Mammary epithelial cell (primary cell): ENCODE measurements at regions of chr1 and their contacts with region 1.

Region 1: DNA sequence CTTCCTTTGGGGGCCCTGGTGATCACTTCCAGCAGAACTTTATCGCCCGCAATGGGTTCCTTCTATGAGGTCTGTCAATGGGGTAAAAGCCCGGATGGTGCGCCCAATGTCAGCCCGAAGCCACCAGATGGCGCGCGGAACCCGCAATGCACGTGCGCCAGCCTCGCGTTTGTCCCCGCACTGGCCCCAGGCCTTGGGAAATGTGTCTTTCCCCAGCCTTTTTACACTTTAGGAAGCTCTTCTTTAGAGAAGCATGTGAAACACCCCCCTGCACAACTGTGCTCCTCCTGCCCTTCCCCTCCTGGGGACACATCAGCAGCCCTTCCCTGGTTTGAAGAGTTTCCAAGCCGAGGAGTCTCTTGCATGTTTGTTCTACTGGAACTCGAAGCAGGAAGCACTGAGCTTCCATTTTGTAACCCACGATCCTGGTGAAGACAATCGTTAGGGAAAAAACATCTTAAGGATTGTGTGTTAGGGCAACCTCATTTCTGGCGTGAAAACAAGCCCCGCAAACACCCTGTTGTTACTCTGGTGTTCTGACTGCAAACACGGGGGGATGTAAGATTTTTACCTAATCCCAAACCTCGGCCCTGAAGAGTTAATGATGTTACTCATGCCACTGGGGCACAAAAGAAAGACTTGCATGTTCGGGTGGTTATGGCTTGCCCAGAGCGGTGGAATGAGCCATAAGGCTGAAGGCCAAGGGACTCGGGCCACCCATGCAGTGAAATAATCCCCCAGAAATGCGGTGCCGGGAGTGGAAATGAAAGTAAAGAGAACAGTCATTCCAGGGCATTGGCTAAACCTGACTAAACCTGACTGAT is 20.4 kb upstream of the TARBP1 start:
- DNase-seq: peak; percentile 84
- H3K4me3 ChIP-seq: peak overlapping the region in 2 of 3 experiments; percentile 10 to 13
- H3K27ac ChIP-seq: peak overlapping the region; percentile 90
- H3K4me1 ChIP-seq: peaks cover 38% of the 10 kb centered on the region
- H3K27me3 ChIP-seq: no peaks in the 10 kb centered on the region
- CTCF ChIP-seq: peak; percentile 89 to 97

Region 2: DNA sequence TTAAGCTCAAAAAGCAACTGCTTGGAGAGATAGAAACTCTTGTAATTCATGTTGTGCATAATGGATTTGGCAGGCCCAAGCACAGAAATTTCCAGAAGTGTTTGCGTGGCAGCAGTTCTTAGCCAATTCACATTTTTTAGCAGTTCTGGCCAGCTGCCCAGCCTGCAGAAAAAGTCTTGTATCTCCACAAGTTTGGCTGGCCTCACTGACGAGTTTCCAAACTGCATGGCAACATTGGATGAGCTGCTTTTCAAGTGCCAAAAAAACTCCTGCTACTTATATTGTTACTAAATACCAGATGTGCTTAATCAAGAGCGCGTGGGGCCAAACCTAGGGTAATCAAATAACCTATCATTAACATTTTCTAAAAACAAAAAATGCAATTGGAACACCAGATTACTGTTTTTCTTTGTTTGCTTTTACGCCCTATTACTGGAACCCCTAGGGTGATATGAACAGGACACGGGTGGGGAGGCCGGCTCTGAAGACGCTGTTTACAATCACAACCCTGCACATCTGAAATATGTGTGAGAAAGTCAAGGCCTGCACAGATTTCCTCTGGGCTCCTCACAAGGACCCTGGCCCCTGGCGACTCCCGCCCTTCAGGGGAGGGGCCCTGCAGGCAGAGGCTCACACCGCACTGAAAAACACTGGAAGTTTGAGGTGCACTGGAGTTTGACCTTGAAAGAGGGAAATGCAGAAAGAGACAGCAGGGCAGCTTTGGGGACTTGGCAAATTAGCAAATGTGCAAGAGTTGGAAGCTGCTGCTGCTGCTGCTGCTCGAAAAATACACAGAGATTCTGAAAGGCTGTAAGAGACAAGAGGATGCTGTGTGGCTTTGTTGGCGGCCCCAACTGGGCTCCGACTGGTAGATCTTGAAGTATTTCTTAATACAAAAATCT is 34.9 kb after region 1 on chr1:
- CTCF ChIA-PET with region 1: no interaction called
- dilution Hi-C with region 1: no loop called
- in situ Hi-C with region 1: no loop called
- intact Hi-C with region 1: loop called (anchors 1 kb)
- DNase-seq: peak; percentile 69
- H3K4me3 ChIP-seq: no peak overlapping the region
- H3K27ac ChIP-seq: peak overlapping the region; percentile 98
- H3K4me1 ChIP-seq: peaks cover 70% of the 10 kb centered on the region
- H3K27me3 ChIP-seq: no peaks in the 10 kb centered on the region
- CTCF ChIP-seq: no peak

Region 3: DNA sequence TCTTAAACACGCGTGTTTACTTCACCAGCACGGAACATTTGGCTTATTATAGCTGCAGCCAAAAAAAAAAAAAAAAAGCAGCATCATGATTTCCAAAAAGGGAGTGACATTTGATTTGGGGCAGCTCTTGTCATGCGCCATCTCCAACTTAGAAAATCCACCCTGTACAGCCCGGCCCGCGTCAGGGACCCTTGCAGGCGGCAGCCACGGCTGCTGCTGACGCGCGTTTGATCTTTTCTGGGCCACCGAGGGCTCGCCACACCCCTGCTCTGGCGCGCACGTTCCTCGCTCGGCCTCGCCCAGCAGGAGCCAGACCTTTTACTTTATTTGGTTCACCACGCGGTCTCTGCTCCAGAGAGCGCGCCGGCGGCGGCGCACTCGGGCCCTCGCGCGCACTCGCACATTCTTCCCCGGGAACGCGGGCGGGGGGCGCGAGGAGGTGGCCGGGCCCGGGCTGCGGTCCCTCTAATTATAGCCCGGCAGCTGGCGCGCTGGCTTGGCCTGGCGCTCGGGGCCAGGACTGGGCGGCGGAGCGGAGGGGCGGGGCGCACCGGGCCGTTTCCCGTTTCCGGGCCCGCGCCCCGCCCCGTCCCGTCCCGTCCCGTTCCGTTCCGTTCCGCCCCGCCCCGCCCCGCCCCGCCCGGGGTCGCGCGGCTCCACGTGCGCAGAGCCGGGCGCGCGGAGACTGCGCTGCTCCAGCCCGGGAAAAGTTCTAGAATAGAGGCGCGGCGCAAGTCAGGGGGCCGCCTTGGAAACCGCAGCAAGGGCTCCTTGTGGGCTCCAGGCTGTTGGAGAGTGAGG is 100.5 kb after region 1 on chr1:
- CTCF ChIA-PET with region 1: interaction called, 3 read pairs
- dilution Hi-C with region 1: loop called (anchors 10 kb)
- in situ Hi-C with region 1: loop called (anchors 5 kb)
- intact Hi-C with region 1: no loop called
- DNase-seq: peak; percentile 87
- H3K4me3 ChIP-seq: peak overlapping the region; percentile 53 to 60 (median 55)
- H3K27ac ChIP-seq: peak overlapping the region; percentile 88
- H3K4me1 ChIP-seq: peaks cover 42% of the 10 kb centered on the region
- H3K27me3 ChIP-seq: no peaks in the 10 kb centered on the region
- CTCF ChIP-seq: no peak

Region 4: GRCh38 chr1:234925440-234926263 is 426.3 kb after region 1 on chr1:
- CTCF ChIA-PET with region 1: no interaction called
- dilution Hi-C with region 1: no loop called
- in situ Hi-C with region 1: no loop called
- intact Hi-C with region 1: loop called (anchors 2 kb)
- DNase-seq: peak; percentile 99
- H3K4me3 ChIP-seq: no peak overlapping the region
- H3K27ac ChIP-seq: peak overlapping the region; percentile 60
- H3K4me1 ChIP-seq: peaks cover 16% of the 10 kb centered on the region
- H3K27me3 ChIP-seq: no peaks in the 10 kb centered on the region
- CTCF ChIP-seq: no peak

Region 5: GRCh38 chr1:235011599-235012435 is 512.5 kb after region 1 on chr1:
- CTCF ChIA-PET with region 1: no interaction called
- dilution Hi-C with region 1: no loop called
- in situ Hi-C with region 1: no loop called
- intact Hi-C with region 1: loop called (anchors 5 kb)
- DNase-seq: peak; percentile 100
- H3K4me3 ChIP-seq: no peak overlapping the region
- H3K27ac ChIP-seq: peak overlapping the region; percentile 97
- H3K4me1 ChIP-seq: peaks cover 20% of the 10 kb centered on the region
- H3K27me3 ChIP-seq: no peaks in the 10 kb centered on the region
- CTCF ChIP-seq: no peak